HEK293T (cell line): ENCODE measurements at regions of chr6 and their contacts with region 1.

Region 1: DNA sequence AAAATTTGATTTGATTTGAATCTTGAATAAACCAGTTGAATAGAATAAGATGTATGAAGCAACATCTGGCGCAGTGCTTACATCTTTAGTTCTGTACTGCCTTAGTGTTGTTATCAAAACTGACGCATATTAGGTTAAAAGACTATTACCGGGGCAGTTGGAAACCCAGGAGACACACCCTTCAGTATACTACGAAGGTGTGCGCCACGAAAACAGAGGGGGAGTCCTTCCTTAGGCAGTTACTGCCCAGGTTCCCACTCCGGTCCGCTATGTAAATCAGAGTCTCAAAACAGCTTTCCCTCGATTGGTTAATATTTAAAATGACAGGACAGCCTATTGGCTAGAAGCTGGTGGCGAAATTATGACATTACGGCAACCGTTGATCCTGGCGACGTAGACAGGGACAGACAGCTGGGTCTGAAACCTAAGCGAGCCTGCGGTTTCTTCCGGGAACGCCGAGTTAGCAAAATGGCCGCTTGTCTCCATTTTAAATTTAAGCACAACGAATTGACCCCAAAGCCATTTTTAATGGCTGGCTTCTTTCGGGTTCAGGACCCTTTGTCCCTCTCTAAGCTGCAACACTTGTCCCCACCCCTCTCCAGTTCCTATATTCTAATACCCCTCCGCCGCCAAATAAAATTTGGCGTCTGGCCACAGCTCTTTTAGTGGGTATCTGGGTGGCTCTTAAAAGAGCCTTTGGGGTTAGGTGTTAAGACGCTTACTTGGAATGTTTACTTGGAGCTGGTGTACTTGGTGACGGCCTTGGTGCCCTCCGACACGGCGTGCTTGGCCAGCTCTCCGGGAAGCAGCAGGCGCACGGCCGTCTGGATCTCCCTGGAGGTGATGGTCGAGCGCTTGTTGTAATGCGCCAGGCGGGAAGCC is 35.8 kb downstream of the HFE start:
- DNase-seq: peak; percentile 71

Region 2: GRCh38 chr6:26025894-26026832 is 96.9 kb before region 1 on chr6:
- CTCF ChIA-PET with region 1: no interaction called
- POLR2A ChIA-PET with region 1: interaction called, 92 read pairs
- DNase-seq: peak; percentile 55

Region 3: GRCh38 chr6:26103770-26104456 is 19.1 kb before region 1 on chr6:
- CTCF ChIA-PET with region 1: no interaction called
- POLR2A ChIA-PET with region 1: interaction called, 87 read pairs
- DNase-seq: peak; percentile 70

Region 4: GRCh38 chr6:26141378-26141904 is 18.4 kb after region 1 on chr6:
- CTCF ChIA-PET with region 1: no interaction called
- POLR2A ChIA-PET with region 1: interaction called, 32 read pairs
- DNase-seq: no peak

Region 5: DNA sequence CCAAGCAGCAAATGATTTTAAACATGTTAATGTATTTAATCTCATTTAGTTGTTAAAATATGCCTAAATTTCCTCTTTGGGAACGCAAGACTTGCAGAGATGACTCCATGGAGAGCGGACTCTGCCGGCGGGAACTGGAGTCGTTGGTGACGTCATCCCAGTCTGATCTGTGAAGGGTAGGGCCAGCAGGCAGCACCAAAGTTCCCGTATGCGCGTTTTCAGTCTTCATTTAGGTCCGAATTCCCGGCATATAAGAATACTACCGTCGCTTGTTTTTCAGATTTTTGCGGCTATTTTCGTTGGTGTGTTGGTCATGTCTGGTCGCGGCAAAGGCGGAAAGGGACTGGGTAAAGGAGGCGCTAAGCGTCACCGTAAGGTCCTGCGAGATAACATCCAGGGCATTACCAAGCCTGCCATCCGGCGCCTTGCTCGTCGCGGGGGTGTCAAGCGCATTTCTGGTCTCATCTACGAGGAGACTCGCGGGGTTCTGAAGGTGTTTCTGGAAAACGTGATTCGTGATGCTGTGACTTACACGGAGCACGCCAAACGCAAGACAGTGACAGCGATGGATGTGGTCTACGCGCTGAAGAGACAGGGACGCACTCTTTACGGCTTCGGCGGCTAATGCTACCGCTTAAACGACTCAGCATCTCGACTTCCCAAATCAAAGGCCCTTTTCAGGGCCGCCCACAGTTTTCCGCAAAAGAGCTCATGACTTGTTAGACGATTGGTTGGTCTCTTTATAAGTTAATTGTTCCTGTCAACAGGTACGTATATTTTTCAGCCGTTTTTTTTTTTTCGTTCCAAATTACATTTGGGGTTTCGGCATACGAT is 81.5 kb after region 1 on chr6:
- CTCF ChIA-PET with region 1: no interaction called
- POLR2A ChIA-PET with region 1: interaction called, 79 read pairs
- DNase-seq: peak; percentile 86

Region 6: DNA sequence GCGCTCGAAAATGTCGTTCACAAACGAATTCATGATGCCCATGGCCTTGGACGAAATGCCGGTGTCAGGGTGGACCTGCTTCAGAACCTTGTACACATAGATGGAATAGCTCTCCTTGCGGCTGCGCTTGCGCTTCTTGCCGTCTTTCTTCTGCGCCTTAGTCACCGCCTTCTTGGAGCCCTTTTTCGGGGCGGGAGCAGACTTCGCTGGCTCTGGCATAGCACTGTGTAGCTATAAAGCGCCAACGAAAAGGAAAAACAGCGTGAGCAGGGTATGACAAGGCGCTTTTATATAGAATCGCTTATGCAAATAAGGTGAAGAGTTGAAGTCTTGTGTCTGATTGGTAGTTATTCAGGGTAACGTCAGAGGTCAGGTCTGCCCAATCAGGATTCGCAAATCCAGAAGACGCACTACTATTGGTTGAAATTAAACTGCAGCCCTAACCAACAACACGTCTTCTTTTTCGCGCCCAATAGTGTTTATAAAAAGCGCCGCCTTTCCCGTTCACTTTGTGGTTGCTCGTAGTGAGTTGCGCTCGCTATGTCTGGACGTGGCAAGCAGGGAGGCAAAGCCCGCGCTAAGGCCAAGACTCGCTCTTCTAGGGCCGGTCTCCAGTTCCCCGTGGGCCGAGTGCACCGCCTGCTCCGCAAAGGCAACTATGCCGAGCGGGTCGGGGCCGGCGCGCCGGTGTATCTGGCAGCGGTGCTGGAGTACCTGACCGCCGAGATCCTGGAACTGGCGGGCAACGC is 1009.7 kb after region 1 on chr6:
- CTCF ChIA-PET with region 1: no interaction called
- POLR2A ChIA-PET with region 1: interaction called, 23 read pairs
- DNase-seq: peak; percentile 85